Activated CD4-positive, alpha-beta T cell treated with anti-CD3 and anti-CD28 coated beads for 36 hours (primary cell): ENCODE measurements at regions of chr17 and their contacts with region 1.

Region 1: DNA sequence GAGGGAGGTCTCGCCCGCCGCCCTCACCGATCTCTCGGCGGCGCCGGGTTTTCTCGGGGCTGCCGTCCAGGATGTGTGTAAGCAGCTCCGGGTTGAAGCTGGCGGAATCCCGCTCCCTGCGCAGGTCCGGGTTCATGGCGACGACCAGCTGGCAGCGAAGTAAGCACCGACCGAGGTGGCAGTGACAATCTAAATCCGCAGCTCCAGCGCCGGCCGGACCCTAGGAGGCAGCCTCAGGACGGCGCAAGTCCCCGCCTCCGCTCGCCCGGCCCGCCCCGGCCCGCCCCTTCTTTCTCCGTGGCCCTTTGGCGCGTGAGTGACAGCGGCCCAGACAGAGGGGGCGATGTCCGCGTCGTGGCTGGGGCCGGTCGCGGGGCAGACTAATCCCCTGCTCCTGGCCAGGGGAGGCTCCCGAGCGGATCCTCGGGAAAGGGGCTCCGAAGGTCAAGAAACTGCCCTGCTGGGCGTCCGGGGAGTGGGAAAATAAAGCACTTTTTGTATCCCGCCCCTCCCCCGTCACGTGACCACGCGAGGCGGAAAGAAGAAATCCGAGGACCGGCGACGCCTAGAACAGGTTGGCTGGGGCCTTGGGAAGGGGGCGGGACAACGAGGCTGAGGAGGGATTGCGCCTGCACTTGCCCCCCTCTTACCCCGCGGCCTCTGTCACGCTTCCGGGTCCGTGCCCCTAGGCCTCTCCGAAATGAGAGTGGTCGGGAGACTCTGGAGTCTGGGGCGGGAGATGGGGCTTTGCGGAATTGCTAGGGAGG is at the starts of genes ACOX1 and TEN1:
- DNase-seq: peak; percentile 98
- ATAC-seq: peak; percentile 96
- H3K4me3 Mint-ChIP-seq: peak within 1 kb of the TSS; percentile 89
- H3K27ac Mint-ChIP-seq: peak within 1 kb of the TSS; percentile 94
- H3K4me1 Mint-ChIP-seq: peaks cover 30% of the 10 kb centered on the region
- H3K27me3 Mint-ChIP-seq: no peaks in the 10 kb centered on the region
- total RNA-seq, gene ACOX1: 27.7 to 33.1 TPM
- total RNA-seq, gene TEN1: 9.8 to 13.6 TPM

Region 2: DNA sequence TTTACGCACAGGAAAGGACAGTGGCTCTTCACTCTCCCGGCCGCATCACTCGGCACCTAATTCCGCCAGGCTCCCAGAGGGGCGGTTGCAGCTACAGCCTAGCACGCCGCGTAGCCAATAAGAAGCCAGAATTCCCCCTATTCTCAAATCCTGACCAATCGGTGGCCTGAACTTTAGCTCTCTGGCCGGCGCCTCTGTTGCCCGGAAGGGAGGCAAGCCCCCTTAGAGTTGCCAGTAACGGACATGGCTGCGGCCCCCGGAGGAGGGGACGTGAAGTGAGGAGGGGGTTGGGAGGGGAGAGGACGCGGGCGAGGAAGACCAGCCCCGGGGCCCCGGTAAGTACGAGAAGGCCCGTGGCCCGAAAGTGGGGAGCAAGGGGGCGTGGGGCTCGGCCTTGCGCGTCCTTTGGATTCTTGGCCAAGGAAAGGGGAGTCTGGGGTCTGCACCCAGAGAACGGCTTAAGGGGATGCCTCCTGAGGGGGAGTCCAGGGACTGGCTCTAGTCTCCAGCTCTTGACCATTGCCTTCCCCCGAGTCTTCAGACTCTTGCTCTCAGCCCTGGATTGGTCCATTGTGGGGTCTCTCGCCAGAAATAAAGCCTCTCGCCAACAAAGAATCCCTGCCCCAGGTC is 522.6 kb before region 1 on chr17 and contains the start of gene TMEM94:
- CTCF ChIA-PET with region 1: no interaction called
- POLR2A ChIA-PET with region 1: no interaction called
- intact Hi-C with region 1: loop called in 1 of 2 experiments (anchors 1 kb)
- DNase-seq: peak; percentile 95
- ATAC-seq: peak; percentile 99
- H3K4me3 Mint-ChIP-seq: peak within 1 kb of the TSS; percentile 89
- H3K27ac Mint-ChIP-seq: peak within 1 kb of the TSS; percentile 92
- H3K4me1 Mint-ChIP-seq: peaks cover 24% of the 10 kb centered on the region
- H3K27me3 Mint-ChIP-seq: no peaks in the 10 kb centered on the region
- total RNA-seq, gene TMEM94: 51.4 to 62.5 TPM

Region 3: DNA sequence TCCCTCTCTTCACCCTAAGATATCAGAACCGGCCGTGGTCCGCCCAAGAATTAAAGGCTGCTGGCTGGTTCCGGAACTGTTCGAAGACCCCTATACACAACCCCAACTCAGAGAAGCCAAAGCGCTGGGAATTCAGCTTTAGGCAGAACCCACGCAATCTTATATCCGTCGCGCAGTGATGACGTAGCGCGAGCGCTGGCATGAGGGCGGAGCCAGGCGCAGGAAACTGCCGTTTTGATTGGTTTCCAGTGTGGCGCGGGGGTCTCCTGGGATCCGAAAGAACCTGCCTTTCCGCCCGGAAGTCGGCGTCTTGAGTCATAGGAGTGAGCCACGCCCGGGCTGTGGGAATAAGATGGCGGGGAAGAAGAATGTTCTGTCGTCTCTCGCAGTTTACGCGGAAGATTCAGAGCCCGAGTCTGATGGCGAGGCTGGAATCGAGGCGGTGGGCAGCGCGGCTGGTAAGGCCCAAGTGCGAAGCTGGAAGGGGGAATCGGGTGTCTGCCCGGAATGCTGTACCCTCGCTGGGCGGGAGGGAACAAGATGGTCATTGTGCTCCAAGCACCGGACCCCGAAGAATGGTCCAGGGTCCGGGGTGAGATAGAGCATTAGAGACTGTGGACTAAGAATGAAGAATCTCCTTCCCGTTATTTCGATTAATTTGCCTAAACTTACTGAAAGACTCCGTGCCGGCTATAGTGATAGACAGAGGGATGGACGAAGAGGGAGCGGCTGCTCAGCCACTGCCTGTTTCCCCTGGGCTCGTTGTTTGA is 311.9 kb before region 1 on chr17 and contains the starts of genes RECQL5 and SAP30BP:
- CTCF ChIA-PET with region 1: no interaction called
- POLR2A ChIA-PET with region 1: no interaction called
- intact Hi-C with region 1: loop called in 1 of 2 experiments (anchors 1 kb)
- DNase-seq: peak; percentile 99
- ATAC-seq: peak; percentile 100
- H3K4me3 Mint-ChIP-seq: no peak within 1 kb of the TSS
- H3K27ac Mint-ChIP-seq: no peak within 1 kb of the TSS
- H3K4me1 Mint-ChIP-seq: peaks cover 34% of the 10 kb centered on the region
- H3K27me3 Mint-ChIP-seq: no peaks in the 10 kb centered on the region
- total RNA-seq, gene RECQL5: 36.4 to 40.5 TPM
- total RNA-seq, gene SAP30BP: 87.8 to 100.0 TPM

Region 4: DNA sequence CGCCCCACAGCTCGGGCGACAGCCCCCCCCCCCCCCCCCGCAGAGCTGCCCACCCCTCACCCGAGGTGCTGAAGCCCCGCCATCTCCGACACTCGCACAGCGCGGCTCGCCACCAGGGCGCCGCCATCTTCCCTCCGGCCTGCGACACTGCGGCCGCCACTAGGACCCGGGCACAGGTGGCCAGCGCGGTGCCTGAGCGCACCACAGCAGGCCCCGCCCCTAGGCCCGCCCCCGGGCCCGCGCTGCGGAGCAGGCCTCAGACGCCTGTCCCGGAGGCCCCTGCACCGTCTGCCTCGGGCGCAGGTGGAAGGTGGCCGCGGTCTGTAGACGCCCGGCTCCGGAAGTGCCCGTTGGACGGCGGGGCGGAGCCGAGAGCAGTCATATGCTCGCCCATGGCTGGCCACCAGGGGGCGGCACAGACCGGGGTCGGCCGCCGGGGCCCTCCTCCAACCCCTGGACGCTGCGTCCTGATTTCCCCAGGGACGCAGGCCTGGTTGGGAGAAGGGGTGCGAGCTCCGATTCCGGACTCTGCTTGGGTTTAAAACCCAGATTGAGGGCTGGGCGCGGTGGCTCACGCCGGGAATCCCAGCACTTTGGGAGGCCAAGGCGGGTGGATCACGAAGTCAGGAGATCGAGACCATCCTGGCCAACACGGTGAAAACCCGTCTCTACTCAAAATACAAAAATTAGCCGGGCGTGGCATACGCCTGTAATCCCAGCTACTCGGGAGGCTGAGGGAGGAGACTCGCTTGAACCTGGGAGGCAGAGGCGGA is 74.2 kb before region 1 on chr17 and contains the start of gene MRPL38:
- CTCF ChIA-PET with region 1: no interaction called
- POLR2A ChIA-PET with region 1: no interaction called
- intact Hi-C with region 1: loop called (anchors 1 kb)
- DNase-seq: peak; percentile 97
- ATAC-seq: peak; percentile 99
- H3K4me3 Mint-ChIP-seq: peak within 1 kb of the TSS; percentile 86
- H3K27ac Mint-ChIP-seq: peak within 1 kb of the TSS; percentile 89
- H3K4me1 Mint-ChIP-seq: peaks cover 5% of the 10 kb centered on the region
- H3K27me3 Mint-ChIP-seq: no peaks in the 10 kb centered on the region
- total RNA-seq, gene MRPL38: 98.0 to 115 TPM

Region 5: DNA sequence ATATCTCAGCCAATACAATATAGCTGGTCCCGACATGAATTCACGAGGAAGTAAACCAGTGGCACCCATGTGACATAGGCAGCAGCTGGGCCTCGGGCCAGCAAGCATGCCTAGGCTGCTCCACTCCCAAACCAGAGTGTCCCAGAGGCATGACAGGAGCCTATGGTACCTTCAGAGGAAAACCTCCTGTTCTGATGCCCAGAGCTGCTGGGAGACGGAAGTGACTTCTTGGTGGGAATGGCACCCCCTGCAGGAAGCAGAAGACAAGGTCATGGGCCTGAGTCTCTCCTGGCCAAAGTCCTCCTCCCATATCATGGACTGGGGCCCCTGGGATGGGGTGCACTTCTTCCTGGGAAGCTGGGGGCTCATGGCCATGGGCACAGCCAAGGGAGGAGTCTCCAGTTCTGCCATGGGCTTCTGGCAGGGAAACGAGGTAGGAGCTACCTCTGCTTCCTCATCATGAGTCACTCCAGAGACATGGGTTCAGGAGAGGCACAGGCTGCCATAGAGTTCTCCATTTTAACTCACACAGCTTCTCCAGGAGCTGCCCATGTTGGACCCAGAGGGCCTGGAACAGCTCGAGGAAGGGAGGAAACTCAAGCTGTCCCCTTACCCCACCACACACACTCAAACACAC is 51.7 kb before region 1 on chr17:
- CTCF ChIA-PET with region 1: no interaction called
- POLR2A ChIA-PET with region 1: no interaction called
- intact Hi-C with region 1: no loop called
- DNase-seq: peak; percentile 27
- ATAC-seq: no peak
- H3K4me3 Mint-ChIP-seq: no peak overlapping the region
- H3K27ac Mint-ChIP-seq: no peak overlapping the region
- H3K4me1 Mint-ChIP-seq: no peaks in the 10 kb centered on the region
- H3K27me3 Mint-ChIP-seq: no peaks in the 10 kb centered on the region

Region 6: DNA sequence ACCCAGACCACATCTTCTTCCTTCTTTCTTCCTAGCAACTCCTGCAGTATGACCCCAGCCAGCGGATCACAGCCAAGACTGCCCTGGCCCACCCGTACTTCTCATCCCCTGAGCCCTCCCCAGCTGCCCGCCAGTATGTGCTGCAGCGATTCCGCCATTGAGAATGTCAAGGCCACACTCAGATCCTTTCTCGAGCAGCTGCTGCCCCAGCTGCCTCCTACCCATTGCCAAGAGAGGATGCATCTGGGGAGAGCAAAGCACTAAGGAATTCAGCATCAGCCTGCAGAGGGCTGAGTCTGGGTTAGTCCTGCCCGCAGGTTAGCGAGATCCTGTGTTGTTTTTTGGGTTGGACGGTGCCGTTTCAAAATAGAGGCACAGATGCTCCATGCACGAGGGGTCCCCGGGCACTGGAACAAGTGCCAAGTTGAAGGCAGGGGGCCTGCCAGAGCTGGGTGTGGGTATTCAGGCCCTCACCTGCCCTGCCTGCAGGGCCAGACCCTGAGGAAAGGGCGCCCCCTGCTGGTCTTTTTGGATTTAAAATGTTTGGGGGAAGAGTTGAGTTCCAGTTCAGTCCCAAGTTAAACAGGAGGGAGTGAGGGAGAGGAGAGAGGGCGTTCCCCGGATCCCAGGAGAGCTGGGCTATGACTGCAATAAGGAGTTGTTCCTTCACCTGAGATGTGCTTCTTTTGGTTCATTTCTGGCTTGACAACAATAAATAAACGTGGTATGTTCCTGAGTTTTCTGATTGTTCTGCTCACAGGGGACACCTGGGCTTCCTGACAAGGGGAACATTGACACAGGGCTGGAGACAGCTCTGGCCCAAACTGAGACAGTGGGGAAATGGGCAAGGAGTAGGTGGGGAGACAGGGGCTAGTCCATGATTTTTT is 26.4 kb after region 1 on chr17:
- CTCF ChIA-PET with region 1: interaction called, 4 read pairs
- POLR2A ChIA-PET with region 1: interaction called, 6 read pairs
- intact Hi-C with region 1: loop called in 1 of 2 experiments (anchors 1 kb)
- DNase-seq: peak; percentile 92
- ATAC-seq: peak; percentile 77
- H3K4me3 Mint-ChIP-seq: no peak overlapping the region
- H3K27ac Mint-ChIP-seq: no peak overlapping the region
- H3K4me1 Mint-ChIP-seq: no peaks in the 10 kb centered on the region
- H3K27me3 Mint-ChIP-seq: no peaks in the 10 kb centered on the region

Region 7: DNA sequence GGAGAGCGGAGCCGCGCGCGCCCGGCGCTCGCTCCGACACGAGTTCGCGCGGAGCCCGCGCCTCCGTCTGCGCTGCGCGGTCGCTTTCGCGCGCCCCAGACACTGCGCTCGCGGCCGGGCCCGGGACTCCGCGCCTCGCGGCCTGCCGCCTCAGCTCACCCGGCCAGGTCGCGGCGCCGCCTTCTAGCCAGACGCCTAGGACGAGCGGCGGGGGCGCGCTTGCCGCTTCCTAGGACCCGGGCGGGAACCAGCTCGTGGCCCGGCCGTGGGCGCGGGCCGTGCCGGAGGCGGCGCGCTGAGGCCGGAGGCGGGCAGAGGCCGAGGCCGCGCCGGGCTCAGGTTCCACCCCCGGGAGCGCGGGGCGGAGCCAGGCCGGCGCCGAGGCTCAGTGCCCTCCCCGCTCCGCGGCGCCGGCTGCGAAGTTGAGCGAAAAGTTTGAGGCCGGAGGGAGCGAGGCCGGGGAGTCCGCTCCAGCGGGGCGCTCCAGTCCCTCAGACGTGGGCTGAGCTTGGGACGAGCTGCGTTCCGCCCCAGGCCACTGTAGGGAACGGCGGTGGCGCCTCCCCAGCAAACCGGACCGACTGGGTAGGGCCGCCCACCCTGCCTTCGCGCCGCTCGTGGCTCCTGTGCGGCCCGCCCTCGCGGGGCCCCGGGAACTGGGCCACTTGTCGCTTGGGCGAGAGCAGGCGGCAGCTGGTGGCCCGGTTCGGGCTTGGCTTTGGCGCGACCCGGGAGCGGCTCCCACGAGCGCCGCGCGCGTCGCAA is 405.3 kb after region 1 on chr17 and contains the start of gene SPHK1:
- CTCF ChIA-PET with region 1: no interaction called
- POLR2A ChIA-PET with region 1: no interaction called
- intact Hi-C with region 1: loop called in 1 of 2 experiments (anchors 1 kb)
- DNase-seq: peak; percentile 86
- ATAC-seq: peak; percentile 72
- H3K4me3 Mint-ChIP-seq: peak within 1 kb of the TSS; percentile 85
- H3K27ac Mint-ChIP-seq: peak within 1 kb of the TSS; percentile 81
- H3K4me1 Mint-ChIP-seq: peaks cover 12% of the 10 kb centered on the region
- H3K27me3 Mint-ChIP-seq: no peaks in the 10 kb centered on the region
- total RNA-seq, gene SPHK1: 7.4 to 11.7 TPM

Region 8: GRCh38 chr17:76671123-76671911 is 692.2 kb after region 1 on chr17:
- CTCF ChIA-PET with region 1: no interaction called
- POLR2A ChIA-PET with region 1: no interaction called
- intact Hi-C with region 1: loop called in 1 of 2 experiments (anchors 1 kb)
- DNase-seq: peak; percentile 100
- ATAC-seq: peak; percentile 100
- H3K4me3 Mint-ChIP-seq: peak overlapping the region; percentile 87
- H3K27ac Mint-ChIP-seq: peak overlapping the region; percentile 95
- H3K4me1 Mint-ChIP-seq: peaks cover 25% of the 10 kb centered on the region
- H3K27me3 Mint-ChIP-seq: no peaks in the 10 kb centered on the region